PC-3 (cell line): ENCODE measurements at regions of chr1 and their contacts with region 1.

Region 1: DNA sequence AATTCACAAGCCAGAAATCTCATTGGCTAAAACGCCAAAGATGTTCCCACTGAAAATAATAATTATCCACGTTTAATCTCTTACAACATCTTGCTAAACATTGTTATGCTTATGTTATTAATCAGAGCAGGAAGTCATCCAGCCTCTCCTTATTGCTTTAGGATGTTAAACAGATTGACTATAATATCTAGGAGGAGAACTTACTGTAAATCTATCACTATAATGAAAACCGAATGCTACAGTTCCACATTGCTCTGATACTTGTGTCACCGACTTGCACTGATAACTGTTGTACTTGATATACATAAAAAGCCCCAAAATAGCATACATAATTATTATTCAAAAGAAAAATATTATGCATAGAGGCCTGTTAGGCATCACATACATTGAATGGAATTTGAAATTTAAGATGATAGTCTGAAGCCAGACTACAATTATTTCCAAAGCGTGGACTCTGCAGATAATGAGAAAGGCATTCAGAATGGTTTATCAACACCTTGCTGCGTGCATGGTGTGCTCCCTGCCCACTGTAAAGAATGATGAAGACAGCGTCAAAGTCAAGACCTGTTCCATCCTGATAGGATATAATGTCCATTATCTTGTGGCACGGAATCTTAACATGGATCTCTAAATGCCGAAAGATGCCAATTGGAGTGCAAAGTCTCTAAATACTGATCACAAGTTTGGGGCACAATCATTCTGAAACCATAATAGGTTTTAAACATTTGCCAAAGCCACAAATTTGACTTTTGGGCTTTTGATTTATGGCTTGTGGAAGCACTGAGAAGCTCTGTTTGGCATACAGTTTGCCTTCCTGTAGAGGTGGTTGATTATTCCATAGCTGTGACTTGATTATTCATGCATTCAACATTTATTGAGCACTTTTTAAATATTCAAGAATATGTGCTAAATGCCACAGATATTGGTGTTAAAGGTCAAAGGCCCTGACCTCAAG is 71.3 kb downstream of the CRB1 start:
- DNase-seq: no peak
- ATAC-seq: no peak
- H3K4me3 ChIP-seq: no peak overlapping the region
- H3K27ac ChIP-seq: no peak overlapping the region
- H3K4me1 ChIP-seq: no peaks in the 10 kb centered on the region
- H3K27me3 ChIP-seq: no peaks in the 10 kb centered on the region
- CTCF ChIP-seq: no peak

Region 2: GRCh38 chr1:197224160-197224559 is 115.2 kb before region 1 on chr1:
- CTCF ChIA-PET with region 1: interaction called, 6 read pairs
- POLR2A ChIA-PET with region 1: no interaction called
- intact Hi-C with region 1: loop called (anchors 1 kb)
- DNase-seq: peak; percentile 51
- ATAC-seq: no peak
- H3K4me3 ChIP-seq: no peak overlapping the region
- H3K27ac ChIP-seq: no peak overlapping the region
- H3K4me1 ChIP-seq: peaks cover 8% of the 10 kb centered on the region
- H3K27me3 ChIP-seq: no peaks in the 10 kb centered on the region
- CTCF ChIP-seq: peak; percentile 57

Region 3: DNA sequence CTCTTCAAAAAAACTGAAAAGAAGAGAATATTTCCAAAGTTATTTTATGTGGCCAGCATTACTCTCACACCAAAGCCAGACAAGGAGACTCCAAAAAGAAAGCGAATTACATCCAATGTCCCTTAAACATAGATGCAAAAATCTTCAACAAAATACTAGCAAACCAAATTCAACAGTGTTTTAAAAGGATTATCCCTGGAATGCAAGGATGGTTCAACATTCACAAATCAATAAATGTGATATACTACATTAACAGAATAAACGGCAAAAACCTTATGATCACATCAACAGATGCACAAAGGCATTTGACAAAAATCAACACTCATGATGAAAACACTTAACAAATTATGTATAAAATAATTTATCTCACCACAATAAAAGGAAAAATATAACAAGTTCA is 228.1 kb after region 1 on chr1:
- CTCF ChIA-PET with region 1: no interaction called
- POLR2A ChIA-PET with region 1: no interaction called
- intact Hi-C with region 1: no loop called
- DNase-seq: no peak
- ATAC-seq: no peak
- H3K4me3 ChIP-seq: no peak overlapping the region
- H3K27ac ChIP-seq: no peak overlapping the region
- H3K4me1 ChIP-seq: no peaks in the 10 kb centered on the region
- H3K27me3 ChIP-seq: no peaks in the 10 kb centered on the region
- CTCF ChIP-seq: no peak